MCF 10A (cell line): ENCODE measurements at regions of chr1 and their contacts with region 1.

Region 1: DNA sequence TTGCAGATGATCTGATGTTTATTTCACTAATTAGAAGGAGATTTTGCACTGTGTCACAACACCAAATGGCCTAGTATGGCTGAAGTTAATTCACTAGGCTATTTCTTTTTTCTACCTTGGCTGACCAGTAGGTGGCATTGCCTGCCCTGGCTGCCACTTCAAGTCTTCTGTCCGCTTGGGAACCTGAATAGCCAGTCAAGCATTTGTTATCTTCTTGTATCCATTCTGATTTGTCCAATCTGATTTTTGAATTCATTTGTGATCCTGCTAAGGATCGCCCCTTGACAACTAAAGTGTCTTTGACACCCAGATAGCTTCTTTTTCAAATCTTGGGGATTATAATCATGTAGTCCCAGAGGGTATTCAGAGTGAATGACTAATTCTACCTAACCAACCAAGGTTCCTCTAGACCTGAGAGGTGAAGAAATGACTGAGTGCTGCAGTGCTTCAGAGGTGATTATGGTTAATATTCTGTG is 99.4 kb downstream of the GIPC2 start:
- DNase-seq: peak; percentile 79
- H3K4me3 Mint-ChIP-seq: no peak overlapping the region
- H3K27ac Mint-ChIP-seq: no peak overlapping the region
- H3K4me1 Mint-ChIP-seq: peaks cover 16% of the 10 kb centered on the region
- H3K27me3 Mint-ChIP-seq: no peaks in the 10 kb centered on the region
- CTCF ChIP-seq: peak; percentile 85

Region 2: GRCh38 chr1:78092686-78093085 is 52.5 kb before region 1 on chr1:
- CTCF ChIA-PET with region 1: no interaction called
- POLR2A ChIA-PET with region 1: no interaction called
- intact Hi-C with region 1: no loop called
- DNase-seq: peak; percentile 77
- H3K4me3 Mint-ChIP-seq: no peak overlapping the region
- H3K27ac Mint-ChIP-seq: no peak overlapping the region
- H3K4me1 Mint-ChIP-seq: peaks cover 25% of the 10 kb centered on the region
- H3K27me3 Mint-ChIP-seq: no peaks in the 10 kb centered on the region
- CTCF ChIP-seq: no peak

Region 3: DNA sequence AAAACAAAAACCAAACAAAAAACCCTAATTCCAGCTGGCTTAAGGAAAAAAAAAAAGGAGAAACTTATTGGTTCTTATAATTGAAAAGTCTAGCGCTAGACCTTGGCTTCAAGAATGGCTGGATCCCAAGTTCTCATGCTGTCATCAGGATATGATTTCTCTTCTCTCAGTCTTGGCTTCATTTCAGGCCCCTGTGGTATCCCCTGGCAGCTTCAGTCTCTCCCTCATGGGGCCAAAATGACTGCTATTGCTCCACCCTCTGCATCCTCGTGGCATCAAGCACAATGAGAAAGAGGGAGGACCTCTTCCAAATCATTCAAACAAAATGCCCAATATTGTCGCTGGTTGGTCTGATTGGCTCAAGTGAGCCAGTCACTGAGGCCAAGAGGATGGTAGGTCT is 18.6 kb before region 1 on chr1:
- CTCF ChIA-PET with region 1: interaction called, 14 read pairs
- POLR2A ChIA-PET with region 1: interaction called, 7 read pairs
- intact Hi-C with region 1: loop called (anchors 2 kb)
- DNase-seq: no peak
- H3K4me3 Mint-ChIP-seq: no peak overlapping the region
- H3K27ac Mint-ChIP-seq: no peak overlapping the region
- H3K4me1 Mint-ChIP-seq: no peaks in the 10 kb centered on the region
- H3K27me3 Mint-ChIP-seq: no peaks in the 10 kb centered on the region
- CTCF ChIP-seq: no peak

Region 4: DNA sequence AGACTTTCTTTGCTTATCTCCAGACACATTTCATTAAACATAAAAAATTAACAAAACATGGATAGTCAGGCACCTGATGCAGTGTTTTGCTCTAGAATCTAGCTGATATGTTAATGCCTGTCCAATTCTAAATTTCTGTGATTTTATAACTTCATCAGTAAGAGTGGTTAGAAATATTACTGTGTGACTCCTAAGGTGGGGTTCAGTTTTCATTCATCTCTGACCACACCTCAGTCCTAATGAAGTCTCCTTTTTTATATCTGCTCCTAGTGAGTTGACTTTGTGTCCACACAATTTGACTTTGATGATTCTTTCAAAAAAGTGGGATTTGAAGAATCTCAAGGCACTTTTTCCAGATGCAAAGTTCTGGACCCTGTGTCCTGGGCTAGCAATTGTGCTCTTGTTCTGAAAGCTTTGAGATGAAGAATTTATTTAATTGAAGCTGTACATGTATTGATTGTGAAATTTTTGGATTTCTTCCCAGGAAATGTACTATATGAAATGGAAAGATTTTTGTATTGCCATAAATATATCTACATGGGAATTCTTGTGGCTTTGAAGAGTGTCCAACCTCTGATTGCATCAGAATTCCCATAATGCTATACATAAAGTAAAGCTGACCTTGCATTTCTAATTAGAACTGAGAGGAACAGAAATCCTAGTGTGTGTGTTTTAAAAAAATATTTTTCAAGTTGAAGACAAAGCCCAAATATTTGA is 11.8 kb after region 1 on chr1:
- CTCF ChIA-PET with region 1: interaction called, 21 read pairs
- POLR2A ChIA-PET with region 1: interaction called, 7 read pairs
- intact Hi-C with region 1: no loop called
- DNase-seq: peak; percentile 88
- H3K4me3 Mint-ChIP-seq: no peak overlapping the region
- H3K27ac Mint-ChIP-seq: peak overlapping the region; percentile 81
- H3K4me1 Mint-ChIP-seq: peaks cover 25% of the 10 kb centered on the region
- H3K27me3 Mint-ChIP-seq: no peaks in the 10 kb centered on the region
- CTCF ChIP-seq: no peak

Region 5: DNA sequence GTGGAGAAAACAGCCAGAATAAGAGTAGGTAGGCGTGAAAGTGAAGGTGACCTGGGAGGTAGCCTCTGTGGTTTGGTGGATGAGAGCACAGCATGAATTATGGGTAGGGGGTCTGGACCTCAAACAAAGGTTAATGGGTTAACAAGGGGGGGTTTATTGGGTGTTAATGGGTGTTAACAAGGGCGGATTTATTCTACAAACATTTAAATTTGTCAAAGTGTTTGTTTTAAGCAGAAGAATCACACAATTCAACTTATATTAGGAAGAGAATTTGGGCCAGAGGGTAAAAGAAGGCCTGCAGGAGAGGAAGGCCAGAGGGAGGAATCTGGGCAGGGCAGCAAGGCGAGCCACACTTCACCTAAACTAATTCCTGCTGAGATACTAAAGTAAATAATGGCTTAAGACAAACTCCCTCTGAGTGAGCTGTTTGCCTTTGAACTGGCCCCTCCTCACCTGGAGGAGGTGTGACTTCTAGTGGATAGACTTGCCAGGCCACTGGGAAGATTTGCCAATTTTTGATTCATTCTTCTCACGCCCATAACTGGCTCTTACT is 92.3 kb after region 1 on chr1:
- CTCF ChIA-PET with region 1: interaction called, 22 read pairs
- POLR2A ChIA-PET with region 1: interaction called, 3 read pairs
- intact Hi-C with region 1: loop called (anchors 5 kb)
- DNase-seq: peak; percentile 94
- H3K4me3 Mint-ChIP-seq: no peak overlapping the region
- H3K27ac Mint-ChIP-seq: peak overlapping the region; percentile 76
- H3K4me1 Mint-ChIP-seq: peaks cover 40% of the 10 kb centered on the region
- H3K27me3 Mint-ChIP-seq: no peaks in the 10 kb centered on the region
- CTCF ChIP-seq: no peak

Region 6: DNA sequence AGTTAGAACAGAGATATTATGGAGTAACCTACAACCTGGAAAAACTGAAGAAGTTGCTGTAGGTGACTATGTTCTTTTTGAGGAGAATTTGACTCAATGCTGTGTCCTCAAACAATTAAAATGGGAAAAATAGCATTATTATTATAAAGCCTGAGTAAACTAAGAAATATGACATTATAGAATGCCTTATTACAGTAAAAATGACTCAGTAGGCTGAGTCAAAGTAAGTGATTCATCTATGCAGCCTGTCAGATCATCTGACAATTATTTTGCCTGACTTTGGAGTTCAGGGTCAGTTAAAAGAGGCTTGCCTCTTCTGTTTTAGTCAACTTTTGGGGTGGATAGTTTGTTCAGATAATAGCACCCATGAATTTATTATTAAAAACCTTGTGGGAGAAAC is 194.9 kb after region 1 on chr1:
- CTCF ChIA-PET with region 1: interaction called, 5 read pairs
- POLR2A ChIA-PET with region 1: no interaction called
- intact Hi-C with region 1: loop called (anchors 1 kb)
- DNase-seq: peak; percentile 79
- H3K4me3 Mint-ChIP-seq: no peak overlapping the region
- H3K27ac Mint-ChIP-seq: peak overlapping the region; percentile 65
- H3K4me1 Mint-ChIP-seq: peaks cover 27% of the 10 kb centered on the region
- H3K27me3 Mint-ChIP-seq: no peaks in the 10 kb centered on the region
- CTCF ChIP-seq: no peak

Region 7: DNA sequence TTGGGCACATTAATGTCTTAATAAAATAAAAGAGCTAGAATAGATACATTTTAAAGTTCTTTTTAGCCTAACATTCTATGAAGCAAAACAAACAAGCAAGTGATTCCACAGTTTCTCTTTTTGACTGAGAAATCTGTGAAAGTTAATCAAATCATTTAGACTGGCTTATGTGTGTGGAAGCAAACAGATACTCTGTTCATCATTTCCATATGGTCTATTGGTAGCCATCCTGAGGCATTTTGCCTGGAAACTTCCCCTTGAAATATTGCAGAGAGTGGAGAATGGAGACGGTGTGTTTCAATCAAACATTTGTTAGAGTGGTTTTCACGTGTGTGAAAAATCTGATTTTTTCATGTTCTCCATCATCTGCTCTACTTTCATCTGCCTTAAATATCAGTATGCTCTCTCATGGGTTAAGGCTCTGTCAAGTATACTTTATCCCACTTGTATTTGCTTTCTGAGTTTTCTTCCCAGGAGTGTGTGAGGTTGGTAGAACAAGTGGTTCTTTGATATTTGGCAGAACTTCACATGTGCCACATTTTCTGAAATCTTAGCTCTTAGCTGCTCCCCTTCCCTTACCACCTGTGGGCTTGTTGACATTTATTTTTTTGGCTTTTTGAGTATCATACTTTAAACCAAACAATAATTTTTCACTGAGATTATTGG is 206.5 kb after region 1 on chr1:
- CTCF ChIA-PET with region 1: no interaction called
- POLR2A ChIA-PET with region 1: no interaction called
- intact Hi-C with region 1: no loop called
- DNase-seq: no peak
- H3K4me3 Mint-ChIP-seq: no peak overlapping the region
- H3K27ac Mint-ChIP-seq: no peak overlapping the region
- H3K4me1 Mint-ChIP-seq: no peaks in the 10 kb centered on the region
- H3K27me3 Mint-ChIP-seq: no peaks in the 10 kb centered on the region
- CTCF ChIP-seq: no peak

Region 8: DNA sequence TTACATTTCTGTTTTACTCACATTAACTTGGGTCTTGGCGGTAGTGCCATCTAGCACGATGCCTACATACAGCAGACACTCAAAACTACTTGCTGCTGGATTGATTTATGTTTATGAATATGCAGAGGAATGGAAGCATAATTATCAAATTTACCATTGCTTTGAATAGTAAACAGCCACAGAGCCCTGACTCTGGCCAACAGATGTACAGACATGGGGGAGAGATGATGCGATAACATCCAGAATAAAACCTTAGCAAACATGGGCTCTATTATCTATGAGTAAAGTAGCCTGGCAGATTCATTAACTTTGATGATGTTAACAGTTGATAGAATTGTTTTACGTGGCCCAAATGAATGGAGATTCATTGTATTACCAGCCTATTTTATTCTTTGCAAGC is 388.4 kb after region 1 on chr1:
- CTCF ChIA-PET with region 1: interaction called, 3 read pairs
- POLR2A ChIA-PET with region 1: no interaction called
- intact Hi-C with region 1: loop called (anchors 5 kb)
- DNase-seq: no peak
- H3K4me3 Mint-ChIP-seq: no peak overlapping the region
- H3K27ac Mint-ChIP-seq: no peak overlapping the region
- H3K4me1 Mint-ChIP-seq: peaks cover 9% of the 10 kb centered on the region
- H3K27me3 Mint-ChIP-seq: no peaks in the 10 kb centered on the region
- CTCF ChIP-seq: no peak

Region 9: DNA sequence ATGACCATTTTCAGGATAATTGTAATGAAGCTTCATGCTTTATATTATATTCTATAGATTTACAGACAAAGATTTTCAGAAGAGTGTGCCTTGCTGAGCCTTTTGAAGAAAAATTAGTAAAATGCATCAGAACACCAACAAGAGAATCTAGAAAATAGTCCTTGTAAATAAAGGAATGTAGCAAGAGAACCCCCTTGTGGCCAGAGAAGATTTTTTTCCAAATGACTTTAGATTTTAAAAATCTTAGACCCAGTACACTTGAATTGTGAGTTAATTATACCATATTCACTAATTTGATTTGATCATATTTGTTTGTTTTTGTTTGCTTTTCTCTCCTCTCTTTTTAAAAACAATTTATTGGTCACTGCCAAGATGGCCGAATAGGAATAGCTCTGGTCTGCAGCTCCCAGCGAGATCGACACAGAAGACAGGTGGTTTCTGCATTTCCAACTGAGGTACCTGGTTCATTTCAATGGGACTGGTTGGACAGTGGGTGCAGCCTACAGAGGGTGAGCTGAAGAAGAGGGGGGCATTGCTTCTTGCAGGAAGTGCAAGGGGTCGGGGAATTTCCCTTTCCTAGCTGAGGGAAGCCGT is 462.3 kb after region 1 on chr1:
- CTCF ChIA-PET with region 1: interaction called, 195 read pairs
- POLR2A ChIA-PET with region 1: interaction called, 6 read pairs
- intact Hi-C with region 1: loop called (anchors 1 kb)
- DNase-seq: peak; percentile 43
- H3K4me3 Mint-ChIP-seq: no peak overlapping the region
- H3K27ac Mint-ChIP-seq: peak overlapping the region; percentile 59
- H3K4me1 Mint-ChIP-seq: no peaks in the 10 kb centered on the region
- H3K27me3 Mint-ChIP-seq: no peaks in the 10 kb centered on the region
- CTCF ChIP-seq: peak; percentile 54